ENCODE measurements at regions of chr1 and their contacts with region 1.

Region 1: DNA sequence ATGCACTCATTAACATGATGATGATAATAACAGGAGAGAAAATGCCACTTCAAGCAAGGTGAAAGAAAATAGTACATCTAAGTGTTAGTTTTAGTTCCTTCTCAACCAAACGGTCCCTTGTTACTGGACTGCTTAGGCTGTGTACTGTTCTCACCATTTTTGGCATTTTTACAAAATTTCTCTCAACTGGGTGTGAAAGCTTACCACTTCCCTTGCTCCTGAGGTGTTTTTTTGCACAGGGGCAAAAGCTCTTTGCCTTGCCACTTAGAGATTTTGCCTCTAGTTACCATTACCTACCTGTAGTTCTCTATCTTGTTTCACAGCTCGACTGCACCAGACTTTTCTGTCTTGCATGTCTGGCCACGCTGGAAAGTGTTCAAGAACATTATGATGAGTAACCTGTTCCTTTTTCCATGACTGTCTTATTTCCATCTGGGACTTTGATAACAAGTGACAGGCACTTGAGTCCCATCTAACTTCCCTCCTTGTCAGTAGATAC is 10.7 kb downstream of the NEK7 start:
- DNase-seq: peak; percentile 42
- ATAC-seq: peak; percentile 18
- H3K4me3 Mint-ChIP-seq: peak overlapping the region; percentile 54
- H3K27ac Mint-ChIP-seq: peak overlapping the region; percentile 93
- H3K4me1 Mint-ChIP-seq: peaks cover 93% of the 10 kb centered on the region
- H3K27me3 Mint-ChIP-seq: no peaks in the 10 kb centered on the region

Region 2: GRCh38 chr1:198187973-198188588 is 20.6 kb after region 1 on chr1:
- CTCF ChIA-PET with region 1: interaction called, 8 read pairs
- POLR2A ChIA-PET with region 1: interaction called, 3 read pairs
- intact Hi-C with region 1: loop called in 1 of 2 experiments (anchors 1 kb)
- DNase-seq: no peak
- ATAC-seq: peak; percentile 75
- H3K4me3 Mint-ChIP-seq: peak overlapping the region; percentile 19
- H3K27ac Mint-ChIP-seq: peak overlapping the region; percentile 62
- H3K4me1 Mint-ChIP-seq: peaks cover 79% of the 10 kb centered on the region
- H3K27me3 Mint-ChIP-seq: no peaks in the 10 kb centered on the region

Region 3: DNA sequence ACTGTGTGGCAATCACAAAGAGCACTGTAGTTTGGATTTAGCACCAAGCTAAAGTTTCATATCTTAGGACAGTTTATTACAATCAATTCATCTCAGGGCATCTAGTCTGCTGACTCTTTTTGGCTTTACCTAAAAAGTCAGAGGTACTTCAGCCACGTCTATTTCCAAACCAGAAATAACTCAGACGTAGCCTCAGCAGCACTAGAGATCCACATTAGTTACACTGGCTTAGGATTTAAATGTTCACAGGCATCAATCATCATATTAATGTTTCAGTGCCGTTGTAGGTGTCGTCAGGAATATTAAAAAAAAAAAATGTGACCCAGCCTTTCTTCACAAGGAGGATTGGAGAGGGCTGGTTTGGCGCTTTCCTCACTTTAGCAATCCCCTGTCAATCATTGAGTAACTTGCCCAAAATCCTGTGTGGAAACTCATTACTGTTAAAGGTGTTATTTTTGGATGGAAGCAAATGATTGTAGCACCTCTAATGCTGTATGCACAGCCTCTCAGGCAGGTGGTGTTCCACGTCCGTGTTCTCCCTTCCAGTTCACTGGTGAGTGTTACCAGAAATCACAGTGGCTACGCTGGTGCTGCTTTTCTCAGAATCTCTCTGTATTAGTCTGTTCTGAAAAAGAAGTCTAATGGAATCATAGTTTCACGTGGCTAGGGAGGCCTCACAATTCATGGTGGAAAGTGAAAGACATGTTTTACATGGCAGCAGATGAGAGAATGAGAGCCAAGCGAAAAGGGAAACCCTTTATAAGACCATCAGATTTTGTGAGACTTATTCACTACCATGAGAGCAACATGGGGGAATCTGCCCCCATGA is 34.7 kb after region 1 on chr1:
- CTCF ChIA-PET with region 1: no interaction called
- POLR2A ChIA-PET with region 1: interaction called, 3 read pairs
- intact Hi-C with region 1: loop called in 1 of 2 experiments (anchors 2 kb)
- DNase-seq: peak; percentile 73
- ATAC-seq: peak; percentile 93
- H3K4me3 Mint-ChIP-seq: peak overlapping the region; percentile 15
- H3K27ac Mint-ChIP-seq: peak overlapping the region; percentile 86
- H3K4me1 Mint-ChIP-seq: peaks cover 75% of the 10 kb centered on the region
- H3K27me3 Mint-ChIP-seq: no peaks in the 10 kb centered on the region